Calu3 (cell line): ENCODE measurements at regions of chr3 and their contacts with region 1.

Region 1: DNA sequence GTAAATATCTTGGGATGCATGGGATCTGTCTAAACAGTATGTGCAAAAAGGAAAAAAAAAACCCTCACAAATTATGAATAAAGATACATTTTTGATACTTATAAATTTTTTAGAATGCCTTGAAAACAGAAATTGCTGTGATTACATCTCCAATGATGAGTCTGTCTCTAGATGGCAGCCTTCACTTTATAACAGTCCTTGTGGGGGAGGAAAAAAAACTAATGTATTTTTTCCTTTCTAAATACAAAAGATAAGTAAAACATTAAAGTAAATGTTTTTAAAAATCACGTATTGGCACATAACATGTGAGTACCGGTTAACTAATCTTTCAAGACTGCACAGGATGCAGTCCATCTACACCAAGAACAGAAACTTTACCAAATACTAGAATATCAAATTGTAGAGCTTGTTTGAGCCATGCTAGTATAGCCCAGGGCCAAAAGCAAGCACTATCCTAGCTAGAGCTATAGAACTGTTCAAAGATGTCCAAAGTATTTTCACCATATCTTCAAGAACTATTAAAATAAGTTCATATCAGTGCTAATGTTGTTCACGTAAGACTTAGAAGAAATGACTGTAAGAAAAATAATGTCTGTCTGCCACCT is 206.4 kb downstream of the STAG1 start:
- DNase-seq: peak; percentile 19
- H3K4me3 Mint-ChIP-seq: no peak overlapping the region
- H3K27ac Mint-ChIP-seq: peak overlapping the region; percentile 40
- H3K4me1 Mint-ChIP-seq: peaks cover 31% of the 10 kb centered on the region
- H3K27me3 Mint-ChIP-seq: no peaks in the 10 kb centered on the region
- CTCF ChIP-seq: peak; percentile 36

Region 2: GRCh38 chr3:136075218-136075808 is 470.5 kb before region 1 on chr3:
- CTCF ChIA-PET with region 1: no interaction called
- intact Hi-C with region 1: loop called (anchors 5 kb)
- DNase-seq: peak; percentile 81
- H3K4me3 Mint-ChIP-seq: no peak overlapping the region
- H3K27ac Mint-ChIP-seq: no peak overlapping the region
- H3K4me1 Mint-ChIP-seq: peaks cover 8% of the 10 kb centered on the region
- H3K27me3 Mint-ChIP-seq: no peaks in the 10 kb centered on the region
- CTCF ChIP-seq: peak; percentile 85

Region 3: DNA sequence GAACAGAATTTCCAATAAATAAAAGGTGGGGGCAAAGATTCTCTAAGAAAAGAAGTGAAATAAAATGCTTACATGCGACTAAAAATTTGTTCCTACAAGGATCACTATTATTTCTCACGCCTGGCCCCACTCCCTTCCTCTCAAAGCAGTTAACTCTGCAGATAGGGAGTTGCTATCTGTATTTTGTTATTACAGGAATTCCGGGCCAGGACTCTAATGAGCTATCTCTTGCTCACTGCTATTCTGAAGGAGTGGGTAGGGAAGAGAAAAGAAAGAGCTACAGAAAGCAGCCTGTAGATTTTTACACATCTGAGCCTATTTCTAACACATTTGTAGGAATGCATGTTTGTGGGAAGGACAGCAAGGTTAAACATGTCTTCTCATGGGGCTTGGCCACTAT is 155.2 kb before region 1 on chr3:
- CTCF ChIA-PET with region 1: interaction called, 7 read pairs
- intact Hi-C with region 1: loop called (anchors 5 kb)
- DNase-seq: no peak
- H3K4me3 Mint-ChIP-seq: no peak overlapping the region
- H3K27ac Mint-ChIP-seq: no peak overlapping the region
- H3K4me1 Mint-ChIP-seq: no peaks in the 10 kb centered on the region
- H3K27me3 Mint-ChIP-seq: no peaks in the 10 kb centered on the region
- CTCF ChIP-seq: no peak

Region 4: DNA sequence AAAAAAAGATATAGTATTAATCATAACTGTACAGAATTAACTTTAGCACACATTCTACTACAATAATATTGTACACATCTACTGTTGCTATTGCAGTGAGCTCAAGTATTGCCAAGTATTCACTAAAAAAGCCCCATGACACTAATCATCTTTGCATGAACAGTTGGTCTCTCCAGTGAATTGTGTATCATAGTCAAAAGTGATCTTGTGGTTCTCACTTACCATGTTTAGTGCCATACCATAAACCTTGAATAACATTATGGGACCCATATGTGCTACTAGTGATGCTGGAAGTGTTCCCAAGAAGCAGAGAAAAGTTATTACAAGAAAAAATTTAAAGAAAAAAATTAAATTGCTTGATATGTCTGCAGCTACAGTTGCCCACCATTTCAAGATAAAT is 118.5 kb before region 1 on chr3:
- CTCF ChIA-PET with region 1: no interaction called
- intact Hi-C with region 1: no loop called
- DNase-seq: no peak
- H3K4me3 Mint-ChIP-seq: no peak overlapping the region
- H3K27ac Mint-ChIP-seq: no peak overlapping the region
- H3K4me1 Mint-ChIP-seq: no peaks in the 10 kb centered on the region
- H3K27me3 Mint-ChIP-seq: no peaks in the 10 kb centered on the region
- CTCF ChIP-seq: no peak

Region 5: GRCh38 chr3:136624894-136625815 is 79.4 kb after region 1 on chr3:
- CTCF ChIA-PET with region 1: no interaction called
- intact Hi-C with region 1: loop called (anchors 2 kb)
- DNase-seq: peak; percentile 84
- H3K4me3 Mint-ChIP-seq: peak overlapping the region; percentile 66
- H3K27ac Mint-ChIP-seq: peak overlapping the region; percentile 97
- H3K4me1 Mint-ChIP-seq: peaks cover 71% of the 10 kb centered on the region
- H3K27me3 Mint-ChIP-seq: no peaks in the 10 kb centered on the region
- CTCF ChIP-seq: no peak

Region 6: DNA sequence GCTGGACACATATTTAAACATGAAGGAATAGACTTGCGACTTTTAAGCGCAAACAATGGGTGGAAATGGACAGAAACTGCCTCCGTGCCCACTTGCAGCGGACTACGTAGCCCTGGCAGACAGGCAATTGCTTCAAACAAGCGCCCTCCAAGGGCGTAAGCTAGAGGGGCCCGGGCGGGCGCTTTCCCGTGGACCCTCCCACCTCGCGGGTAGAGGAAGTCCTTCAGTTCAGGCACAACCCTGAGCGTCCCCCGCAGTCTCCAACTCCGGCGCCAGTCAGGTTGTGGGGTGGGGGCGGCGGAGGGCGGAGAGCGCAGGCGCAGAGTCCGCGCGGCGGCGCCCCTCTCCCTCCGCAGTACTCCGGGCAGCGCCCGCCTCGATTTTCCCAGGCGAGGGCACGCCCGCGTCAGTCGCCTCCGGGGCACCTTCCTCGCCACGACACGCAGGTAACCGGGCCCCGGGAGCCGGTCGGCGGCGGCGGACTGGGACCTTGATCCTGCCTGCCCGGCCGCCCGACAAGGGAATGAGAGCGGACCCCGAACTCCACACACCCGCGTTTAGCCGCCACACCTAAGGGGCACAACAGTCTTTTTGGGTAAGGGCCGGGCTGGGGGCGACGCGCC is 273.1 kb after region 1 on chr3 and contains the start of gene SLC35G2:
- CTCF ChIA-PET with region 1: no interaction called
- intact Hi-C with region 1: loop called (anchors 10 kb)
- DNase-seq: peak; percentile 84
- H3K4me3 Mint-ChIP-seq: peak within 1 kb of the TSS; percentile 90
- H3K27ac Mint-ChIP-seq: peak within 1 kb of the TSS; percentile 92
- H3K4me1 Mint-ChIP-seq: peaks cover 27% of the 10 kb centered on the region
- H3K27me3 Mint-ChIP-seq: no peaks in the 10 kb centered on the region
- CTCF ChIP-seq: no peak
- total RNA-seq, gene SLC35G2: 31.0 and 31.4 TPM in 2 replicates

Region 7: DNA sequence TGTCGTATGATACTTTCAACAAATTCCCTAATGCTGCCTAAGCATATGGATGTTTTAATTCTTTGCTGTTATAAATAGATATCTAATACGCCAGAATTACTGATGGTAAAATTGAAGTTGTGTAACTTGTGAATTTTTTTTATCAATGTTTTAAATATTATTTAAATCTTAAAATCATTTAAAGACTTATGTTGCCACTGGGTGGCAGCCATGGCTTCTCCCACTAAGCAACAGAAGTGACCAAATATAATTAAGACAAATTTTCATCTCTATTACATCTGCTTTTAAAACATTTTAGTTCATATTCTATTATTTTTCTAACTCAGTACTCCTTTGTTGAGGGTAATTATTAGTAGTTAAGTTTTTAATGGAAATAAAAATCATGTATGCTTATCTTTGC is 403.9 kb after region 1 on chr3:
- CTCF ChIA-PET with region 1: no interaction called
- intact Hi-C with region 1: loop called (anchors 5 kb)
- DNase-seq: no peak
- H3K4me3 Mint-ChIP-seq: no peak overlapping the region
- H3K27ac Mint-ChIP-seq: no peak overlapping the region
- H3K4me1 Mint-ChIP-seq: peaks cover 42% of the 10 kb centered on the region
- H3K27me3 Mint-ChIP-seq: no peaks in the 10 kb centered on the region
- CTCF ChIP-seq: peak; percentile 27

Region 8: DNA sequence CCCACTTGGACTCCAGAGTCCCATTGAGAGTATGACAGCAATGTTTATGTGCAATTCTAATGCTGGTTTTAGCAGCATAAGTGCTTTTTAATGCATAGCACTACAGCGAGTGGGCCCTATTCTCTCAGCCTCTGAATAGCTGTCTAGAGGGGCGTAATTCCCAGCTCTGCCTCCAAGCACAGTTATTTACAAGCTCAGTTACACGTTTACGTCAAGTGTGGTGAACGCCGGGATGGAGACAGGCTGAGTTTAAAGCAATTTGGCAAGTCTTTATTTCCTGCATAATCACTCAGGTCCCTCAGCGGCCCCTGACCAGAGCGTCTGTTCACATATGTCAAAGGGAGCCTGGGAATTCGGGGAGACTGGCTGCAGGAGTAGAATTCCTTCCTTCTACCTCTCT is 1262.2 kb after region 1 on chr3:
- CTCF ChIA-PET with region 1: no interaction called
- intact Hi-C with region 1: no loop called
- DNase-seq: no peak
- H3K4me3 Mint-ChIP-seq: no peak overlapping the region
- H3K27ac Mint-ChIP-seq: no peak overlapping the region
- H3K4me1 Mint-ChIP-seq: no peaks in the 10 kb centered on the region
- H3K27me3 Mint-ChIP-seq: no peaks in the 10 kb centered on the region
- CTCF ChIP-seq: no peak